ENCODE measurements at regions of chr3 and their contacts with region 1.

Region 1: GRCh38 chr3:196632046-196632751 is 7.3 kb upstream of the NRROS start:
- DNase-seq: peak; percentile 80
- H3K4me3 ChIP-seq: peak overlapping the region; percentile 50 to 55 (median 55)
- H3K27ac ChIP-seq: peak overlapping the region; percentile 19
- H3K4me1 ChIP-seq: peaks cover 6% of the 10 kb centered on the region
- H3K27me3 ChIP-seq: peaks cover 0 to 3% of the 10 kb centered on the region in 2 experiments
- CTCF ChIP-seq: peak in 1 of 2 donors; percentile 43
- POLR2A ChIP-seq: peak; percentile 89

Region 2: DNA sequence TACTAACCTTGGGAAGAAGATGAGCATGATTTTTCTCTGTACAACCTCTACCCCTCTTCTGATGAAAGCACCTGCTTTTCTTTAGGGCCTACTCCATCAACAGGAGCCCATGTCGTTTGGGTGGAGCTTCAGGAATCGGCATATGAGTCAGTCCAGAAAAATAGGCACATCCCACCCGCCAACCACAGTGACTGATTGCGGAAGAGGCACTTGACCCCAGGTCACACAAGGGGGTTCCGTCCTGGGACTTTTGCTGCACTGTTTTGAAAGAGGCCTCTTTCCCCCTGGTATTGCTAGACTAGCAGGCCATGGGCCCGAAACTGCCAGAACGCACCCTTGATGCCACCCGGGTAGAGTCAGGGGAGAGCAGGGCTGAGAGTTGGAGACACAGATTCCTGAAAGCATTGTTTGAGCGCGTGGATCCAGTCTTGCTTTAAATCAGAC is 12.0 kb before region 1 on chr3:
- CTCF ChIA-PET with region 1: interaction called, 13 read pairs
- POLR2A ChIA-PET with region 1: interaction called, 3 read pairs
- dilution Hi-C with region 1: no loop called
- intact Hi-C with region 1: loop called (anchors 1 kb)
- DNase-seq: no peak
- H3K4me3 ChIP-seq: no peak overlapping the region
- H3K27ac ChIP-seq: peak overlapping the region; percentile 8
- H3K4me1 ChIP-seq: peaks cover 10% of the 10 kb centered on the region
- H3K27me3 ChIP-seq: no peaks in the 10 kb centered on the region
- CTCF ChIP-seq: no peak
- POLR2A ChIP-seq: no peak

Region 3: GRCh38 chr3:196650740-196651311 is 18.6 kb after region 1 on chr3:
- CTCF ChIA-PET with region 1: interaction called, 3 read pairs
- POLR2A ChIA-PET with region 1: no interaction called
- dilution Hi-C with region 1: no loop called
- intact Hi-C with region 1: loop called (anchors 1 kb)
- DNase-seq: peak; percentile 98
- H3K4me3 ChIP-seq: no peak overlapping the region
- H3K27ac ChIP-seq: no peak overlapping the region
- H3K4me1 ChIP-seq: peaks cover 24% of the 10 kb centered on the region
- H3K27me3 ChIP-seq: no peaks in the 10 kb centered on the region
- CTCF ChIP-seq: no peak
- POLR2A ChIP-seq: no peak

Region 4: GRCh38 chr3:196684548-196685407 is 52.6 kb after region 1 on chr3:
- CTCF ChIA-PET with region 1: interaction called, 4 read pairs
- POLR2A ChIA-PET with region 1: no interaction called
- dilution Hi-C with region 1: no loop called
- intact Hi-C with region 1: loop called (anchors 1 kb)
- DNase-seq: peak; percentile 61
- H3K4me3 ChIP-seq: no peak overlapping the region
- H3K27ac ChIP-seq: no peak overlapping the region
- H3K4me1 ChIP-seq: peaks cover 7% of the 10 kb centered on the region
- H3K27me3 ChIP-seq: peaks cover 0 to 3% of the 10 kb centered on the region in 2 experiments
- CTCF ChIP-seq: peak; percentile 73
- POLR2A ChIP-seq: no peak

Measured in endothelial cell of umbilical vein (primary cell).